GM12878 (cell line): ENCODE measurements at regions of chr1 and their contacts with region 1.

Region 1: DNA sequence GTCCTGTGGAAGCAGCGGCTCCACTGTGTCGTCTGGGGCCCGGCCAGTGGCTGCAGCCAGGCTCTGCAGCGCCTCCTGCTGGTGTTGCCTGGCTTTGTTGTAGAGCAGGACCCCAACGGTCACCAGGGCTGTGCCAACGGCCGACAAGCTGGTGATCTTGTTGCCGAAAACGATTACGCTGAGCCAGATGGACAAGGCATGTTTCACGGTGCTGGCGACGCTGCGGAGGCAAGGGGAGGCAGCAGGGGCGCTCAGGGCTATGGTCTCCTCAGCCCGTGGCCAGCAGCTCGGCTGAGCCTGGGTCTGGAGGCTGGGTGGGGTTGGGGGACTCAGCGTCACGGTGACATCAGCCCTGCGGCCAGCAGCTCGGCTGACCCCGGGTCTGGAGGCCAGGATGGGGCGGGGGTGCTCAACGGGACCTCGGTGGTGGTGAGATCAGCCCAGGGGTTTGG is 7.0 kb upstream of the CDK11B start:
- DNase-seq: no peak
- ATAC-seq: peak; percentile 51; the same call in 2 of the 3 replicates
- H3K4me3 ChIP-seq: no peak overlapping the region
- H3K27ac ChIP-seq: no peak overlapping the region
- H3K4me1 ChIP-seq: no peaks in the 10 kb centered on the region
- H3K27me3 ChIP-seq: no peaks in the 10 kb centered on the region
- CTCF ChIP-seq: peak; percentile 21 to 53 (median 47)
- EP300 ChIP-seq: no peak
- POLR2A ChIP-seq: peak; percentile 29; the same call in 1 of the 2 replicates
- RAD21 ChIP-seq: 0 out of 2 replicates have a peak, but pooled peaks have one; percentile 3

Region 2: DNA sequence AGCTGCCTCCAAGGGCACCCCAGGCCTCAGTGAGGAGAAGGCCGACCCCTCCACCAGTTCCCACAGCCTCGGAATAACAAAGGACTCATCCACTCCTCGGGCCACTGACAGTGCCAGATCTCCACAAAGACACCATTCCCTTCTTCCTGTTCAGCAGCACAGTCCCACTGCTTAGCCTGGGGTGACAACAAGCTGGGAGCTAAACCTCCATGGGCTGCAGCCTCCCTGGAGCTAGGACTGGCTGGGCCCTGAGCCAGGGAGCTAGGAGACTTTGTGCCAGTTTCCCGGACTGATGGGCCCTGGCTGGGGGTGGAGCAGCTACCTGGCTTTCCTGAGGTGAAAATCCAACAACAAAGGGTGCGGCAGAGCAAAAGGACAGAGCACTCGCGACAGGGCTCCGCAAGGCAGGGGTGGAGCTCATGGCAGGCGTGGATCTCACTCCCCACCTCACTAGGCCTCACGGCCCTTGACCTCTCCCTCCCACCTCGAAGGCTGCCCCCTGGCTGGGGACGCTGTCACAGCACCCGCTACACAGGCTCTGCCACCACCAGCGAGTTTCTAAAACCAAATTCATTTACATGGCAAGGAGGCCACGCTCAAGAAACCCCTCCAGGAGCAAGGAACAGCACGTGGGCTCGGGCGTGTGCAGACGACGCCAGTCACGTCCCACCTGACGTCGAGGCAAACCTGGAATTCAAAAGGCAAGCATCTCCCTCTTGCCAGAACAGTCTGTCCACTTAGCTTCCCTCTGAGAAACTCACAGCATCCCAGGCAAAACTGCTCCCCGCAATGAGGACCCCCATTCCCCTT is 13.0 kb after region 1 on chr1:
- CTCF ChIA-PET with region 1: interaction called, 13 read pairs
- POLR2A ChIA-PET with region 1: interaction called, 4 read pairs
- RAD21 ChIA-PET with region 1: interaction called, 4 read pairs
- SMC1A ChIA-PET with region 1: interaction called, 10 read pairs
- in situ Hi-C with region 1: no loop called
- intact Hi-C with region 1: no loop called
- DNase-seq: peak; percentile 23
- ATAC-seq: peak; percentile 81
- H3K4me3 ChIP-seq: peak overlapping the region; percentile 33; the same call in 1 of the 2 replicates
- H3K27ac ChIP-seq: peak overlapping the region; percentile 94
- H3K4me1 ChIP-seq: peaks cover 24% of the 10 kb centered on the region
- H3K27me3 ChIP-seq: no peaks in the 10 kb centered on the region
- CTCF ChIP-seq: peak; percentile 70 to 84 (median 74)
- EP300 ChIP-seq: no peak
- POLR2A ChIP-seq: peak; percentile 15
- RAD21 ChIP-seq: peak; percentile 39; the same call in 1 of the 2 replicates